Sciatic nerve (tissue), 2 donors: ENCODE measurements at regions of chrX and their contacts with region 1.

Region 1: DNA sequence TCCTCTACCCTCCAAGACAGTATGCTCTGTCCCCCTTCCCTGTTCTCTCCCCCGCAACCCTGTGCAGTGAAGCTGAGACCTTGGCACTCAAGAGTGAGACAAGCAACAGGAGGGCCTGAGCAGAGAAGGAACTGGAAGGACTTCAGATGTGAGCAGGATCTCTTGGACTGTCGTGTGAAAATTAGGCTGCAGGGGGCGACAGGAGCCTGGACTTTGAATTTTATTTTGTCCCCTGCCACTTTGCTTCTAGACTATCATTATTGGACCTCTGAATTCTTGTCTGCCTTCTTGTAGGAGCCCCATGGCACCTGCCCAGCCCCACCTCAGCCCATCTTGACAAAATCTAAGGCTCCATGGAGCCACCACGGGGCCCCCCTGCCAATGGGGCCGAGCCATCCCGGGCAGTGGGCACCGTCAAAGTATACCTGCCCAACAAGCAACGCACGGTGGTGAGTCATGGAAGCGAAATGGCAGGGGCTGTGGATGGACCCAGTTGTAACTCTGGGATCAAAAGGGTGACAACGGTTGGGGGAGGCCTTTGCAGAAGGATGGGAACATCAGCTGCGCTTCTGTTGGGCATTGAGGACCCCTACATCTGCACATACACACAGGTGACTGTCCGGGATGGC is 1.7 kb downstream of the ARAF start:
- DNase-seq: no peak
- ATAC-seq: no peak

Region 2: GRCh38 chrX:47595716-47596251 is 33.1 kb after region 1 on chrX:
- intact Hi-C with region 1: loop called (anchors 1 kb)
- DNase-seq: no peak
- ATAC-seq: peak; percentile 84